PC-3 (cell line): ENCODE measurements at regions of chr11 and their contacts with region 1.

Region 1: DNA sequence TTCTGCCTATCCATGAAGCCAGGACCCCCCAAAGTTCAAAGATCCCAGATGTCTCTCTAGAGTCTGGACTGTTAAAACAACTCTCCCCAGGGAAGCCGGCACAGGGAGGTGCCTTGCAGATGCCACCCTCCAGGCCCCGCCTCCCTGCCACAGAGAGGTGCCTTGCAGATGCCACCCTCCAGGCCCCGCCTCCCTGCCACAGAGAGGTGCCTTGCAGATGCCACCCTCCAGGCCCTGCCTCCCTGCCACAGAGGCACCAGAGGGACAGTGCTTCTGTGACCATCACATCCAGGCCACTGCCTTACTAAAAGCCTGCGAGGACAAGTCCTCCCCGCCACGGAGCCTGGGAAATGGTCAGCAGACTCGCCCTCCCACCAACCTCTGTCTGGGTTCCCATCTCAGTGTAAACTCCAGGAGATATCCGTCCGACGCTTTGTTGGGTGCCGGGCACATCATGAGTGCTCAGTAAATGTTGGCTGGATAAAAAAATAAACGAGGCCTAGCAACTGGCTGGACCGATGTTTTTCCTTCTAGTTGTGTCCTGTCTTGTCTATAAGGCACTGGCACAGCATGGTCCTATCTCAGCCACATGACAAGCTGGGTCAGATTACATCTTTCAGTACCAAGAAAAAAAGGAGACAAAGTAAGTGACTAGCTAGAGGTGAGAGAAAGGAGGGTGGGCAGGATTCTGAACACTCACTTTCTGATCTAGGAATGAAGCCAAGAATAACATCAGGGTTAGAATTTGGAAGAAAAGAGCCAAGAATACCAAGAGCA is 91.2 kb upstream of the CSNK2A3 start:
- DNase-seq: no peak
- ATAC-seq: peak; percentile 27; the same call in 1 of the 2 replicates
- H3K4me3 ChIP-seq: no peak overlapping the region
- H3K27ac ChIP-seq: no peak overlapping the region
- H3K4me1 ChIP-seq: no peaks in the 10 kb centered on the region
- H3K27me3 ChIP-seq: no peaks in the 10 kb centered on the region
- CTCF ChIP-seq: no peak

Region 2: DNA sequence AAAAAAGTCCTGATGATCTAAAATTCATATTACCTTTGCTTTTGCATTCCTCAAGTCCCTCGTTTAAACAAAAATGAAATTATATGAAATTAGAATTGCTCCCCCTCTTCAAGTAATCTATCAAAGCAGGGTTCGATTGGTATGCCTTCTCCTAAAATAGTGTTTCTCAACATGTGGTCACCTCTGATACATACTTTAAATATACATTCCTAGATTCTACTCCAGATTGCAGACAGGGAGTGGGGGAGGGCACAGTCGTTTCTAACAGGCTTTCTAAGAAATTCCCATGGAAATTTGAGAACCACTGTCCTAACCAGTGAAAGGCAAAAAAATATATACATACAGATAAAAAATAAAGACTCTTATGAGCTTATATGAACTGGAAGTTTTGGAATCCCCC is 728.1 kb before region 1 on chr11:
- CTCF ChIA-PET with region 1: no interaction called
- POLR2A ChIA-PET with region 1: interaction called, 19 read pairs
- intact Hi-C with region 1: no loop called
- DNase-seq: peak; percentile 65
- ATAC-seq: no peak
- H3K4me3 ChIP-seq: no peak overlapping the region
- H3K27ac ChIP-seq: no peak overlapping the region
- H3K4me1 ChIP-seq: peaks cover 13% of the 10 kb centered on the region
- H3K27me3 ChIP-seq: no peaks in the 10 kb centered on the region
- CTCF ChIP-seq: no peak

Region 3: GRCh38 chr11:11370255-11370961 is 73.8 kb before region 1 on chr11:
- CTCF ChIA-PET with region 1: no interaction called
- POLR2A ChIA-PET with region 1: no interaction called
- intact Hi-C with region 1: no loop called
- DNase-seq: no peak
- ATAC-seq: no peak
- H3K4me3 ChIP-seq: no peak overlapping the region
- H3K27ac ChIP-seq: no peak overlapping the region
- H3K4me1 ChIP-seq: no peaks in the 10 kb centered on the region
- H3K27me3 ChIP-seq: no peaks in the 10 kb centered on the region
- CTCF ChIP-seq: no peak